Activated CD8-positive, alpha-beta memory T cell treated with anti-CD3 and anti-CD28 coated beads, Interleukin-2, amount 10 ng/mL, durations not matched to agents 7 days and 5 days (primary cell): ENCODE measurements at regions of chr12 and their contacts with region 1.

Region 1: GRCh38 chr12:93569656-93570551 is 2.6 kb upstream of the SOCS2 start:
- DNase-seq: peak; percentile 86
- ATAC-seq: peak; percentile 60
- H3K4me3 Mint-ChIP-seq: peak overlapping the region; percentile 85
- H3K27ac Mint-ChIP-seq: peak overlapping the region; percentile 81
- H3K4me1 Mint-ChIP-seq: peaks cover 27% of the 10 kb centered on the region
- H3K27me3 Mint-ChIP-seq: peaks cover 18% of the 10 kb centered on the region

Region 2: DNA sequence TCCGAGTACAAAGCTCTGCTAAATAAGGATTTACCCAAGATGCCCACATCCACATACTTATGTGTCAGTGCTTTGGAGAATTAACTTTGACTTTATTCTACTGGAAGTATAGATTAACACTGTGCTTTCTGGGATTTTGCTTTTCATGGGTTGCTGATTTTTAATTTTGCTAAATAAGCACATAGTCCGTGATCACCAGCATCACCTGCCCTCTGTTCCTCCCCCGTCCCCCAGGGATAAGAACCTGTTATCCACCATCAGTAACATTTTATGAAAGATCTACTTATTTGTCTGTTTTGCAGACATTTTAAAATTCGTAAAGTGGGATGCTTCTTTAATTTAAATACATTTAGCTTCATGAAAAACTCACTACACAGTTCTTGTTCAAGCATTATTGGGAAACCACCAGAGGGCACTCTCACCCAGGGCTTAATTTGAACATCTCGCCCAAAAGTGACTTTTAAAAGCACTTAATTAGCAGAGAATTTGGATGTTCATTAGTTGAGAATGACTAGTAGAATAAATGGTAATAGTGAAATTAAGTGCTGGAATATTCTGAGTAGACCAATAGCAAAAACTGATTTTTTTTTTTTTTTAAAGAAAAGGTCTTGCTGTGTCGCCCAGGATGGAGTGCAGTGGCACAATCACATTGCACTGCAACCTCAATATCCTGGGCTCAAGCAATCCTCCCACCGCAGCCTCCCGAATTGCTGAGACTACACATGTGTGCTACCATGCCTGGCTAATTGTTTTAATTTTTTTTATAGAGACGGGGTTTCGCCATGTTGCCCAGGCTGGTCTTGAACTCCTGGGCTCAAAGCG is 66.9 kb before region 1 on chr12:
- CTCF ChIA-PET with region 1: interaction called, 18 read pairs
- DNase-seq: peak; percentile 71
- ATAC-seq: peak; percentile 42
- H3K4me3 Mint-ChIP-seq: no peak overlapping the region
- H3K27ac Mint-ChIP-seq: no peak overlapping the region
- H3K4me1 Mint-ChIP-seq: peaks cover 17% of the 10 kb centered on the region
- H3K27me3 Mint-ChIP-seq: no peaks in the 10 kb centered on the region

Region 3: GRCh38 chr12:93742110-93742934 is 172.4 kb after region 1 on chr12:
- CTCF ChIA-PET with region 1: interaction called, 18 read pairs
- DNase-seq: peak; percentile 74
- ATAC-seq: peak; percentile 98
- H3K4me3 Mint-ChIP-seq: peak overlapping the region; percentile 83
- H3K27ac Mint-ChIP-seq: peak overlapping the region; percentile 90
- H3K4me1 Mint-ChIP-seq: peaks cover 25% of the 10 kb centered on the region
- H3K27me3 Mint-ChIP-seq: no peaks in the 10 kb centered on the region

Region 4: DNA sequence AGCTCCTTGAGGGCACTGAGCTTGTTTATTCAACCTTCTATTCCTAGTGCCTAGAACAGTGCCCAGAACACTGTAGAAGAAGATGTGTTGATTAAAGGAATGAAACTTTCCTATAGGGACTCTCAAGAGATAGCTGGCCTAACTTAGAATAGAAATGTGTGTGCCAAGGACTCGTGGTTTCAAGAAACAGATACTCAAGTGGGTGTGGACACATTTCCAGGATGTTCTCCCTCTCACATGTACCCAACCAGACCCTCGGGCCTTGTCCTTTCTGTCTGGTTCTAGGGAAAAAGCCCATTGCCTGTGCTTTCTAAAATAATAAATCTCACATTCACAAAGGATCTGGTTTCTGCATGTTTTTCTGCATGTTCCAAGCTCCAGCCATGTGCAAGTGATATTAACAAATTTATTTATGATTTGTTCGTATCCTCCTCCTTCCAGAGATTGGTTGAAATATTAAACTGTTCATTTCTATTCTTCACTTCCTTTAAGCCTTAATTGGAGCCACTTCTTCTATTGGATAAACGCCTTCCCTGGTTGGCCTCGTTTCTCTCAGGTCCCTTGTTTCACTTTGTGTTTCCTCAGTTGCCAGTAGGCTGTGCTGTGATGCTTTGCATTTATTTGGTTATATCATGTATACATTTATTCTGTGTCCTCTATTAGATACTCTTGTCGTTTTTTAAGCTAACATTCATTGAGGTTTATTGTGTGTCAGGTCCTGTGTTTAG is 197.1 kb after region 1 on chr12:
- CTCF ChIA-PET with region 1: interaction called, 25 read pairs
- DNase-seq: peak; percentile 55
- ATAC-seq: peak; percentile 81
- H3K4me3 Mint-ChIP-seq: no peak overlapping the region
- H3K27ac Mint-ChIP-seq: peak overlapping the region; percentile 50
- H3K4me1 Mint-ChIP-seq: peaks cover 28% of the 10 kb centered on the region
- H3K27me3 Mint-ChIP-seq: no peaks in the 10 kb centered on the region

Region 5: GRCh38 chr12:93868771-93869170 is 298.9 kb after region 1 on chr12:
- CTCF ChIA-PET with region 1: no interaction called
- DNase-seq: no peak
- ATAC-seq: no peak
- H3K4me3 Mint-ChIP-seq: no peak overlapping the region
- H3K27ac Mint-ChIP-seq: no peak overlapping the region
- H3K4me1 Mint-ChIP-seq: no peaks in the 10 kb centered on the region
- H3K27me3 Mint-ChIP-seq: peaks cover 14% of the 10 kb centered on the region